Cardiac septum (tissue), 1 donor: ENCODE measurements at regions of chr2 and their contacts with region 1.

Region 1: GRCh38 chr2:204325468-204325867 is 219.8 kb upstream of the PARD3B start:
- DNase-seq: no peak

Region 2: DNA sequence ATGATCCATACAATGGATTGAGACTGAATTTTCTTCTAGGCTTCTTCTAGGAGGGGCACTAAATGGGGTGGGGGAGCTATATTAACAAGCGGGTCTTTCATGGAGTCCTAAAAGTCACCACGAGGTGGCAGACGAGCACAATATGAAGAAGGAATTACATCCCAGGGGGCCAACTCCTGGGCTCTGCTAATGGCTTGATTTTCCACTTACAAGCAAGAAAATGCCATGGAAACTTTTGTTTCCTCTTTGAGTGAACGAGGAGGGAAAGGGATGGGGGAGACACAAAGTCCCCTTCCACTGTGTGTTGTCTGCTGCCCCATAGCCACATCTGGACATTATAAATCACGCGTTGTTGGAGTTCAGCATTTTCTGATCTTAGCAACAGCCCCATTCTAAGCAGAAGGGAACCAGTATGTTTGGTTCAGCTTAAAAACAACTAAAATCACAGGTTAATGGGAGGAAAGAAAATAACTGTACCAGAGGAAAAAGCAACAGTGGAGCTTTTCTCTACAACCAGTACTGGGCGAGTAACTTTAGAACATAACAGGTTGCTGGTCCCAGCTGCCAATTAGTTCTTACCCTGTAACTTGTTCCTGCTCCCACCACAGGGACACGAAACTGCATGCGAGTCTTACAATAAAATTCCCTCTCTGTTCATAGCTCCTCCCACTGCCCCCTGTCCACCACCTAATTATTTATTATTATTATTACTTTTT is 65.1 kb before region 1 on chr2:
- intact Hi-C with region 1: loop called (anchors 5 kb)
- DNase-seq: no peak

Region 3: GRCh38 chr2:204282525-204282924 is 42.9 kb before region 1 on chr2:
- intact Hi-C with region 1: no loop called
- DNase-seq: no peak

Region 4: DNA sequence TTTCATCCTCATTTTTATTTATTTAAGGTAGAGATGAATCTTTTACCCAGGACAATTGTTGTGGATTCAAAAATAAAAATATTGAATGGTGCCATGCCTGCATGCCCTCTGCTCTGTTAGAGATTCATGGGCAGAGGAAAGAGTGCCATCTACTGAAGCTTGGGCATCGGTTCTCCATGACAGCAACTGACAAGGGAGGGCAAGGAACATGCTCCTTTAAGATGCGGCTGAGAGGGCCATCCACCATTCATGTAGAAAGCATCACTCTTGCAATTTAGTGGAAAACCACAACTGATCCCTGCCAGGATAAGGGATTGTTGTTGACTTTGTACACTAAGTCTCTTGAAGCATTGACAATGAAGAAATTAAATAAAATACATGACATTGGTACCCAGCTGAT is 299.7 kb after region 1 on chr2:
- intact Hi-C with region 1: loop called (anchors 10 kb)
- DNase-seq: no peak

Region 5: GRCh38 chr2:205675861-205676516 is 1350.5 kb after region 1 on chr2:
- intact Hi-C with region 1: loop called (anchors 5 kb)
- DNase-seq: no peak

Region 6: DNA sequence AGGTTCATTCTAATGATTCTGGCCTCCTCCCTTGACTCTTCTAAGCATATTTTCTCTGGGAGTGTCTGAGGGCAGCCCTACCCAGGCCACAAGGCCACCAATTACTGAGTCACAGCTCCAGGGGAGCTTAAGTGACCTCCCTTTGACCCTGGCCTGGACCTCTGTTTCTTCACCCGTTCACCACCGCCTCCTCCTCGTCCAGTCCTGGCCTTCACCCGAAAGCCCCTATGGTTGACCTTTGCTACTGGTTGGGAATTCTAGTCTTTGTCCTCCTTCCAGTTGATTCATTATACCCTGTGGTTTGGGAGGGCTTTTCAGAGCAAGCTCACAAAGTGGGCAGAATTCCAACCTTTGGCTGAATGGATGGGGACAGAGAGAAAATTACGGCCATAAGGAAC is 1429.5 kb after region 1 on chr2:
- intact Hi-C with region 1: loop called (anchors 10 kb)
- DNase-seq: no peak

Region 7: GRCh38 chr2:205925373-205926337 is 1600.2 kb after region 1 on chr2:
- intact Hi-C with region 1: loop called (anchors 10 kb)
- DNase-seq: peak; percentile 92